Heart left ventricle (tissue), 16 donors: ENCODE measurements at regions of chrX and their contacts with region 1.

Region 1: DNA sequence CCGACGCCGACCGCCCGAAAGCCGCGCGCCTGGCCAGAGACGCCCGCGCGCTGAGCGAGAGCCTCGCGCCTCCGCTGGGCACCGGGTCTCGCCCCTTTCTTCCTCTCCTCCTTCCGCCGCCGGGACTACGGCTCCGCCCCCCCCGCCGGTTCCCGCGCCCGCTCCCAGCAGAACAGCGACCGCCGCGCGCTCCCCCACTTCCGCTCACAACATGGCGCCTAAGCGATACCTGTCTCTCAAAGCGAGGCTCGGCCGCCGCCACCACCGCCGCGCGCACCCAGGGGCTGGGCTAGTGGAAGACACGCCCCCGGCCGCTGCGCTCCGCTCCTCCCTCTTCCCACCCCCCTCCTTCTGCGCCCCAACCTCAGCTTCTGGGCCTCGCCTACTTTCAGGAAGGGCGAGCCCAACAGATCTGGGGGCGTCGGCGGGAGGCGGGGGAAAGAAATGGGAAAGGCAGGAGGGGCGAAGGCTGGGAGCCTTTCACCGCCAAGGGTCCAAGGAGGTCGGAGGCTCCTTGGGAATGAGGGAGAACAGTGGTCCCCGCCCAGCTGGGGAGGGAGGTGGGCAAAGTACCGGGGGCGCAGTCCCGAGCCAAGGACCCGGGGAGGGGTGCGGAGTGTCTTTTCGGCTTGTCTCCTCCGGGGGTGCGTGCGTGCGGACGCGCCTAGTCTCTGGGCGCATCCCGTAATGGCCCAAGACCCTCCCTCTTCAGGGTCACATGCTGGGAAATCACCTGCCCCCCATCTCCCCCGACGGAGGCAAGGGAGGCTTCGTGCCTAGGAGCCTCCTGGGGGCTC is at the start of gene RPS6KA3:
- DNase-seq: peak; percentile 90 to 95 (median 92)
- ATAC-seq: peak; percentile 94 to 97 (median 96)
- H3K4me3 ChIP-seq: peak within 1 kb of the TSS; percentile 38 to 95 (median 69)
- H3K27ac ChIP-seq: peak within 1 kb of the TSS; percentile 26 to 89 (median 83)
- H3K4me1 ChIP-seq: peaks cover 0 to 30% (median 4%) of the 10 kb centered on the region in 12 donors
- H3K27me3 ChIP-seq: peaks cover 0 to 9% (median 0%) of the 10 kb centered on the region in 9 donors
- CTCF ChIP-seq: no peak
- POLR2A ChIP-seq: peak in 1 of 2 donors; percentile 76
- total RNA-seq, gene RPS6KA3: 28.1 to 52.3 (median 39.8) TPM

Region 2: GRCh38 chrX:20042221-20042620 is 224.8 kb before region 1 on chrX:
- intact Hi-C with region 1: no loop called
- DNase-seq: no peak
- ATAC-seq: no peak
- H3K4me3 ChIP-seq: no peak overlapping the region
- H3K27ac ChIP-seq: no peak overlapping the region
- H3K4me1 ChIP-seq: no peaks in the 10 kb centered on the region
- H3K27me3 ChIP-seq: peaks cover 0 to 12% (median 0%) of the 10 kb centered on the region in 9 donors
- CTCF ChIP-seq: no peak
- POLR2A ChIP-seq: no peak

Region 3: DNA sequence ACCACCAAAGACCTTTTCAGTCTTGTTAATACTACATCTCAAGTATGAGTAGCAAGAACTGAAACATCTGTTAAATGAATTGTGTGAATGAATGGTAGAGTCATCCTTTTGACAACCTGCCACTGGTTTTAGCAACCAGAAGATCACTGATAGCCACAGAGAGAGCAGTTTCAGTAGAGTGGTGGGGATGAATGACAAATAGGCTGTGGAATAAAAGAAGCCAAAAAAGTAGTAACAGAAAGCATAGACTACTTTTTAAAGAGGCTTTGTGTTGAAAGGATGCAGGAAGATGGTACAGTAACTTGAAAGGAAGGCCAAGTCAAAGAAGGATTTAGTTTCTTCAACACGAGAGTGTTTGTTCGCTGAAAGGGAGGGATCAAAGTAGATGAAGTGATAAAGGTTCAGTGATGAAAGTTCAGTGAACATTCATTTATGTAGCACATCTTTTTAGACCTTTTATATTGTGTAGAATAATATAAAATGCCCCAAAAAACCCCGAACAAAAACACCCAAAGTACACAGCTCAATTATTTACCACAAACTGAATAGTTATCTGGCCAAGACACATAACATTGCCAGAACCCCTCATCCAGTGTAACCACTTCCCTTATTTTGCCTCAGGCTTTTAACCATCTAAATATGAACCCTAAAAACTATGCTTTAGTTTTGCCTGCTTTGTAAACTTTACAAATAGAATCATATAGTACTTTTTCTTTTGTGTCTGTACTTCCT is 85.2 kb before region 1 on chrX:
- intact Hi-C with region 1: no loop called
- DNase-seq: no peak
- ATAC-seq: no peak
- H3K4me3 ChIP-seq: no peak overlapping the region
- H3K27ac ChIP-seq: no peak overlapping the region
- H3K4me1 ChIP-seq: no peaks in the 10 kb centered on the region
- H3K27me3 ChIP-seq: peaks cover 0 to 4% (median 0%) of the 10 kb centered on the region in 9 donors
- CTCF ChIP-seq: no peak
- POLR2A ChIP-seq: no peak

Region 4: DNA sequence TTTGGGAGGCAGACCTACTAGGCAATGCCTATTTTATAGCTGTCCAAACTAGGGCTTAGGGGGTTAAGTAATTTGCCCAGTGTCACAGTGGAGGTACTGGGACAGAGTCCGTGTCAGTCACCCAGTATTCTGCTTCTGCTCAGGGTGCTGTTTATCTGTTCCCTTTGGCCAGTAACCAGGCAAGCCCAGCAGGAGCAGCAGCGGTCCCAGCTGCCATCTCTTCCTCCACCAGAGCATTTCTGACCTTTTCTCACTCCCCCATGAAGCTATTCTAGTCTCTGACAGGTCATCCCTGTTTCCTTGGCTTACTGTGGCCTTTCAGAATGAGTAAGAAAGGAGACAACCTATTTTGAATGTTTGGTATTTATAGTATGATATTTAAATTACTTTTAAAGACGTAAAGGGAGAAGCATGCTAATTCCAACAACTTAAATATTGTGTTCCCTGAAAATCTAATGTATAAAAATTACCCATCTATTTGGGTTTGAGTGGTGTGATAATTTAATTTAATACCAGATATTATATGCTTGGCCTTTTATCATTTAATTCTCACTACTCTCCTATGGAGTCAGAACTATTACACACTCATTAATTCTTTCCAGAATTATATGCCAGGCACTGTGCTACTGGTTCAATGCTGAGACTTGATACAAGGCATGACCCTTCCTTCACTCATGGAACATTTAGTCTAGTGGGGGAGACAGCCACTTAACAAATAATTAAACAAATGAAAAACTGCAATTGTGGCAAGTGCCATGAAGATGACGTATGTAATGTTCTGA is 60.9 kb before region 1 on chrX:
- intact Hi-C with region 1: loop called in 3 of 10 experiments (anchors 10 kb)
- DNase-seq: peak in 4 of 5 donors; percentile 19 to 46 (median 34)
- ATAC-seq: peak; percentile 83 to 96 (median 94)
- H3K4me3 ChIP-seq: no peak overlapping the region
- H3K27ac ChIP-seq: peak overlapping the region in 6 of 12 donors; percentile 5 to 59 (median 20)
- H3K4me1 ChIP-seq: peaks cover 0 to 25% (median 6%) of the 10 kb centered on the region in 12 donors
- H3K27me3 ChIP-seq: peaks cover 0 to 14% (median 0%) of the 10 kb centered on the region in 9 donors
- CTCF ChIP-seq: peak in 1 of 12 donors; percentile 12
- POLR2A ChIP-seq: no peak

Region 5: GRCh38 chrX:20224814-20225487 is 42.1 kb before region 1 on chrX:
- intact Hi-C with region 1: loop called in 2 of 10 experiments (anchors 5 kb)
- DNase-seq: no peak
- ATAC-seq: peak in 3 of 4 donors; percentile 15 to 70 (median 63)
- H3K4me3 ChIP-seq: no peak overlapping the region
- H3K27ac ChIP-seq: peak overlapping the region in 5 of 12 donors; percentile 4 to 43 (median 22)
- H3K4me1 ChIP-seq: peaks cover 0 to 43% (median 12%) of the 10 kb centered on the region in 12 donors
- H3K27me3 ChIP-seq: no peaks in the 10 kb centered on the region
- CTCF ChIP-seq: no peak
- POLR2A ChIP-seq: no peak

Region 6: GRCh38 chrX:20300822-20301221 is 33.8 kb after region 1 on chrX:
- intact Hi-C with region 1: no loop called
- DNase-seq: no peak
- ATAC-seq: no peak
- H3K4me3 ChIP-seq: no peak overlapping the region
- H3K27ac ChIP-seq: no peak overlapping the region
- H3K4me1 ChIP-seq: no peaks in the 10 kb centered on the region
- H3K27me3 ChIP-seq: peaks cover 0 to 19% (median 0%) of the 10 kb centered on the region in 9 donors
- CTCF ChIP-seq: no peak
- POLR2A ChIP-seq: no peak

Region 7: DNA sequence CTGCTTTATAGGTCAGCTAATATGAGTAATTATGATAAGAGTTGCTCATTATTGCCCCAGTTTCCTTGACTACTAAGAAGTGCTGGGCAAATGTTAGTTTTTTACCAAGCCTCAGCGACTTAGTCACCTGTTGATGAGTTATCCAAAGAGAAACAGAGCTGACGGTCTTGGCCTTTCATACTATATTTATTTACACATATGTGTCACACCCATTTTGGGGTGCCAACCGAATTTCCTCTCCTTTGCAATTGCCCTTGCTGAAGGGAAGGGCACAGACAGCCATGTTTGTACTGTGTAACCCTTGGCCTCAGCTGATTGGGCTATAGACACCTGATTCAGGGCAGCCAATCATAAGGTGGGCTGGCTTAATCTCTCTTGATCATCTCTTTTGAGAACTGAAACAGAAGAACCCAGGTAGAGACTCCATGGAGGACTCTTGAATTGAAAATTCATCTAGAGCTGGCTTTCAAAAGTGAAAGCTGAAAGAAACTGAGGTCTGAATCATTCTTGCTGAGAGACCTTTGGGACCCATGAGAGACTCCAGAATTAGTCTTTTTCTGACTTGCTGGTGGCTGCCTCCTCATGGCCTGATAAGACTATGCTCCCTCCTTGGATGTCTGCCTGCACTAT is 111.4 kb after region 1 on chrX:
- intact Hi-C with region 1: loop called in 1 of 10 experiments (anchors 10 kb)
- DNase-seq: no peak
- ATAC-seq: no peak
- H3K4me3 ChIP-seq: no peak overlapping the region
- H3K27ac ChIP-seq: no peak overlapping the region
- H3K4me1 ChIP-seq: peaks cover 0 to 10% (median 0%) of the 10 kb centered on the region in 12 donors
- H3K27me3 ChIP-seq: no peaks in the 10 kb centered on the region
- CTCF ChIP-seq: no peak
- POLR2A ChIP-seq: no peak